ENCODE measurements at regions of chr7 and their contacts with region 1.

Region 1: GRCh38 chr7:45136106-45137060 is 21.2 kb upstream of the RAMP3 start:
- DNase-seq: peak; percentile 90
- H3K4me3 Mint-ChIP-seq: no peak overlapping the region
- H3K27ac Mint-ChIP-seq: no peak overlapping the region
- H3K4me1 Mint-ChIP-seq: peaks cover 10% of the 10 kb centered on the region
- H3K27me3 Mint-ChIP-seq: peaks cover 27% of the 10 kb centered on the region
- CTCF ChIP-seq: peak; percentile 86

Region 2: GRCh38 chr7:44559485-44559884 is 576.9 kb before region 1 on chr7:
- CTCF ChIA-PET with region 1: no interaction called
- POLR2A ChIA-PET with region 1: no interaction called
- intact Hi-C with region 1: no loop called
- DNase-seq: no peak
- H3K4me3 Mint-ChIP-seq: no peak overlapping the region
- H3K27ac Mint-ChIP-seq: no peak overlapping the region
- H3K4me1 Mint-ChIP-seq: peaks cover 9% of the 10 kb centered on the region
- H3K27me3 Mint-ChIP-seq: no peaks in the 10 kb centered on the region
- CTCF ChIP-seq: no peak

Region 3: DNA sequence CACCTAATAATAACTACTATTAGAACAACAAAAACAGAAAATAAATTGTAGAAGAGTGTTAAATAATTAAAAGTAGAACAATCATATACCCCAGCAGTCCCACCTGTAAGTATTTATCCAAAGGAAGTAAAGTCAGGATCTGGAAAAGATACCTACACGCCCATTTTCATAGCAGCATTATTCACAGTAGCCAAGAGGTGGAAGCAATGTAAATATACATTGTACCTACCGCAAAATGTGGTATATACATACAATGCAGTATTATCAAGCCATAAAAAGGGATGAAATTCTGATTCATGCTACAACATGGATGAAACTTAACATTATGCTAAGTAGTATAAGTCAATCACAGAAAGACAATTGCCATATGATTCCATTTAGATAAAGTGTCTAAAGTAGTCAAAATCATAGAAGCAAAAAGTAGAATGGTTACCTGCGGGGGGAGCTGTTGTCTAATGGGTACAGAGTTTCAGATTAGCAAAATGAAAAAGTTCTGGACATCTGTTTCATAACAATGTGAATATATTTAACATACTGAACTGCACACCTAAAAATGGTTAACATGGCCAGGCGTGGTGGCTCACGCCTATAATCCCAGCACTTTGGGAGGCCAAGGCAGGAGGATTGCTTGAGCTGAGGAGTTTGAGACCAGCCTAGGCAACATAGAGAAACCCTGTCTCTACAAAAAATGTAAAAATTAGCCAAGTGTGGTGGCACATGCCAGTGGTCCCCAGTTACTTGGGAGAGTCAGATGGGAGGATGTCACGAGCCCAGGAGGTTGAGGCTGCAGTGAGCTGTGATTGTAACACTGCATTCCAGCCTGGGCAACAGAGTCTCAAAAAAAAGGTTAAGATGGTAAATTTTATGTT is 548.3 kb before region 1 on chr7:
- CTCF ChIA-PET with region 1: interaction called, 16 read pairs
- POLR2A ChIA-PET with region 1: no interaction called
- intact Hi-C with region 1: loop called (anchors 1 kb)
- DNase-seq: peak; percentile 76
- H3K4me3 Mint-ChIP-seq: no peak overlapping the region
- H3K27ac Mint-ChIP-seq: no peak overlapping the region
- H3K4me1 Mint-ChIP-seq: peaks cover 7% of the 10 kb centered on the region
- H3K27me3 Mint-ChIP-seq: peaks cover 6% of the 10 kb centered on the region
- CTCF ChIP-seq: peak; percentile 72

Region 4: DNA sequence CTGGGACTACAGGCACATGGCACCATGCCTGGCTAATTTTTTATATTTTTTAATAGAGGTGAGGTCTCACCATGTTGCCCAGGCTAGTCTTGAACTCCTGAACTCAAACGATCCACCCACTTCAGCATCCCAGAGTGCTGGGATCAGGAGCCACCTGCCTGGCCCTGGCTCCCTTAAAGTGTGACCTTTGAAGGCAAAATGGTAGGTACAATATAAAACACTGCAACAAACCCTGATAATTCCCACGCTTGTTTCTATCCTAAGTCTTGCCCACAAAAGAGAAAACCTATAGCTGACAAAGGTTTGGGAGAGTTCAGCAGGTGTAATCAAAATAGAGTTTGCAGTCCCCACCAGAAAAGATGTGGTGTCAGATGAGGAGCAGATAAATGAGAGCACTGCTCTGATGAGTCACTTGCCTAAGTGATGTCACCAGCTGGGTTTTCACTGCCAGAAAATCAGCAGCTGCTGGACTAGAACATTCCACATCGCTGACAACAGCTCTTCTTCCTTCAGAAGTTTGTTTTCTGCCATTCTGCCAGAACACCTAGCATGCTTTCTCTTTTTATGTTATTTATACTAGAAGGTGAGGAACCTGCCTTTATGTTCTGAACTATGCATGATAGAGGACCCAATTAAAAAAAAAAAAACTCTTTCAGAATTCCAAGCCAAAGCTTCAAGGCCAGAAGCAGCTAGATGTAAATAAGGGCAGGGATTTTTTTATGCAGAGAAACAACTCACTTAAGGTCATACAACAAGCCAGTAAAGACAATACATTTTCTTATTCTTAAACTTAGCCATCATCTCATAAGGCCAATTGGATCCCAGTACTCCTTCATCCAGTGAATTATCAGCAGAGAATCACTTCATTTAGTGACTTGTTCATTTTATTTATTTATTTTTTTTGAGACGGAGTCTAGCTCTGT is 269.0 kb before region 1 on chr7:
- CTCF ChIA-PET with region 1: interaction called, 16 read pairs
- POLR2A ChIA-PET with region 1: interaction called, 4 read pairs
- intact Hi-C with region 1: no loop called
- DNase-seq: peak; percentile 76
- H3K4me3 Mint-ChIP-seq: no peak overlapping the region
- H3K27ac Mint-ChIP-seq: peak overlapping the region; percentile 73
- H3K4me1 Mint-ChIP-seq: peaks cover 6% of the 10 kb centered on the region
- H3K27me3 Mint-ChIP-seq: no peaks in the 10 kb centered on the region
- CTCF ChIP-seq: no peak

Region 5: DNA sequence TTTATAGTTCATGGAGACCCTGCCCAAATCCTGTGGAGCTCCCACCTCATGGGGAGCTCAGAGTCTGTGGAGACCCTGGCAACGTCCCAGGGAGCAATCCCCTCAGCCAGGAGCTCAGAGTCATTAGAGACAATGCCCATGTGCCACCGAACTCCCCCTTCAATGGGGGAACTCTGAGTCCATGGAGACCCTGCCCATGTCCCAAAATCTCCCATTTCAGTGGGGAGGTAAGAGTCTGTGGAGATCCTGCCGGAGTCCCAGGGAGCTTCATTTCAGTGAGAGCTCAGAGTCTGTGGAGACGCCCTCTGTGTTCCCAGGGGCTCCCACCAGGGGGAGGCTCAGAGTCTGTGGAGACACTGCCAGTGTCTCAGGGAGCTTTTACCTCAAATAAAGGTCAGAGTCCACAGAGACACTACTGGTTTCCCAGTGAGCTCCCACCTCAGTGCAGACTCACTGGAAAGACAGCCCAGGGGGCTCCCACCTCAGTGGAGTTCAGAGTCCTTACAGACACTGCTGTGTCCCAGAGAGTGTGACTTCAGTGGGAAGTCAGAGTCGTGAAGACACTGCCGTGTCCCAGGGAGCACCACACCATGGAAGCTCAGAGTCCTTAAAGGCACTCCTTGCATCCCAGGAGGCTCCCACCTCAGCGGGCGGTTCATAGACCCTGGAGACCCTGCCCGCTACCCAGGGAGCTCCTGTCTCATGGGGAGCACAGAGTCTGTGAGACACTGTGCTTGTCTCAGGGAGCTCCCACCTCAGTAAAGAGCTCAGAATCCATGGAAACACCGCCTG is 162.6 kb before region 1 on chr7:
- CTCF ChIA-PET with region 1: interaction called, 6 read pairs
- POLR2A ChIA-PET with region 1: no interaction called
- intact Hi-C with region 1: loop called (anchors 1 kb)
- DNase-seq: peak; percentile 67
- H3K4me3 Mint-ChIP-seq: no peak overlapping the region
- H3K27ac Mint-ChIP-seq: no peak overlapping the region
- H3K4me1 Mint-ChIP-seq: peaks cover 7% of the 10 kb centered on the region
- H3K27me3 Mint-ChIP-seq: no peaks in the 10 kb centered on the region
- CTCF ChIP-seq: peak; percentile 49

Region 6: GRCh38 chr7:45089341-45089891 is 47.0 kb before region 1 on chr7:
- CTCF ChIA-PET with region 1: no interaction called
- POLR2A ChIA-PET with region 1: no interaction called
- intact Hi-C with region 1: no loop called
- DNase-seq: peak; percentile 30
- H3K4me3 Mint-ChIP-seq: no peak overlapping the region
- H3K27ac Mint-ChIP-seq: no peak overlapping the region
- H3K4me1 Mint-ChIP-seq: peaks cover 12% of the 10 kb centered on the region
- H3K27me3 Mint-ChIP-seq: no peaks in the 10 kb centered on the region
- CTCF ChIP-seq: no peak

Region 7: DNA sequence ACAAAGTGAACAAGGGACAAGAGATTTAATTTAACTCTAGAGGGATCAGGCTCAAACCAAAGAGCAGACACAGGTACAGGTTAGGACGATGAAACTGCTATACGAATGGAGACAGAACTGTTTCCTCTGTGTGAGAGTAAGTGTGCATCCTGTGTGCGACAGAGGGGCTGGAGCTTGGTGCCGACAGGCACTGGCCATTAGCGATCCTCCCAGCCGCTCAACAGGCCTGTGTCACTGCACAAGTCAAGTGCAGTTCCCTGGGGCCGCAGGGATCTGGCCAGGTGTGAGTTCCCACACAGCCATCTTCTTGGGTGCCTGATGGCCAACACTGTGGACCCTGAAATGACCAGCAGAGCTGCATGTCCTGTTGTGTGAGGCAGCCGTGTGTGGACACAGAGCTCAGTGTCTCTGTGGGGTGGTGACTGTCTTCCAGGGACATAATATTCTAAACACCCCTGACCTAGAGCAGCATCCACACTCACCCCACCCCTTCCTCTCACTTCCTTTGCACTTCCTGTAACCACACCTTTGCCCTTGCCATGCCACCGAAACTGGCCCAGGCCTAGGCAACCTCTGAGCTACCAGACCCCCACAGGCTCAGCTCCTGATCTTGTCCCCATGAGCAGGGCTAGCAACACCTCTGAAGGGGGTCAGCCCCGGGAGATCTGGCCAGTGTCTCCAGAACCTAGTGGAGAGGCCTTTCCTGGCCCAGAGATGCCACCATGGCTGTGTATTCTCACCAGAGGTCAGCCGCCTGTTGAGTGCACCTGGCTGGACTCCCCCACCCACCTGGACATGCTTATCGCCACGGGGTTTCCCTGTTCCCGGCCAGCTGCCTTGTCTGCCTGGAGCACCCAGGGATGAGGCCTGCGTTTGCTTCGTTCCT is 13.2 kb before region 1 on chr7:
- CTCF ChIA-PET with region 1: interaction called, 47 read pairs
- POLR2A ChIA-PET with region 1: interaction called, 3 read pairs
- intact Hi-C with region 1: no loop called
- DNase-seq: no peak
- H3K4me3 Mint-ChIP-seq: no peak overlapping the region
- H3K27ac Mint-ChIP-seq: no peak overlapping the region
- H3K4me1 Mint-ChIP-seq: no peaks in the 10 kb centered on the region
- H3K27me3 Mint-ChIP-seq: no peaks in the 10 kb centered on the region
- CTCF ChIP-seq: no peak

Measured in MCF 10A (cell line).